ENCODE measurements at regions of chr1 and their contacts with region 1.

Region 1: GRCh38 chr1:181021811-181022434 is 747 bp downstream of the STX6 start:
- DNase-seq: peak in 8 of 9 experiments; percentile 42 to 82 (median 59)
- ATAC-seq: peak; percentile 37
- H3K4me3 ChIP-seq: peak overlapping the region; percentile 84 to 91
- H3K4me3 Mint-ChIP-seq: peak overlapping the region; percentile 95
- H3K27ac ChIP-seq: peak overlapping the region; percentile 71 to 84
- H3K27ac Mint-ChIP-seq: peak overlapping the region; percentile 96
- H3K4me1 ChIP-seq: peaks cover 31% of the 10 kb centered on the region
- H3K4me1 Mint-ChIP-seq: peaks cover 44% of the 10 kb centered on the region
- H3K27me3 ChIP-seq: no peaks in the 10 kb centered on the region
- H3K27me3 Mint-ChIP-seq: no peaks in the 10 kb centered on the region
- CTCF ChIP-seq: no peak

Region 2: GRCh38 chr1:179129702-179130473 is 1892.0 kb before region 1 on chr1:
- CTCF ChIA-PET with region 1: no interaction called
- POLR2A ChIA-PET with region 1: no interaction called
- intact Hi-C with region 1: no loop called
- DNase-seq: peak in 5 of 9 experiments; percentile 6 to 83 (median 64)
- ATAC-seq: peak; percentile 96
- H3K4me3 ChIP-seq: peak overlapping the region; percentile 12 to 26
- H3K4me3 Mint-ChIP-seq: peak overlapping the region; percentile 68
- H3K27ac ChIP-seq: peak overlapping the region; percentile 52 to 80
- H3K27ac Mint-ChIP-seq: peak overlapping the region; percentile 90
- H3K4me1 ChIP-seq: peaks cover 17% of the 10 kb centered on the region
- H3K4me1 Mint-ChIP-seq: peaks cover 19% of the 10 kb centered on the region
- H3K27me3 ChIP-seq: no peaks in the 10 kb centered on the region
- H3K27me3 Mint-ChIP-seq: no peaks in the 10 kb centered on the region
- CTCF ChIP-seq: no peak

Region 3: DNA sequence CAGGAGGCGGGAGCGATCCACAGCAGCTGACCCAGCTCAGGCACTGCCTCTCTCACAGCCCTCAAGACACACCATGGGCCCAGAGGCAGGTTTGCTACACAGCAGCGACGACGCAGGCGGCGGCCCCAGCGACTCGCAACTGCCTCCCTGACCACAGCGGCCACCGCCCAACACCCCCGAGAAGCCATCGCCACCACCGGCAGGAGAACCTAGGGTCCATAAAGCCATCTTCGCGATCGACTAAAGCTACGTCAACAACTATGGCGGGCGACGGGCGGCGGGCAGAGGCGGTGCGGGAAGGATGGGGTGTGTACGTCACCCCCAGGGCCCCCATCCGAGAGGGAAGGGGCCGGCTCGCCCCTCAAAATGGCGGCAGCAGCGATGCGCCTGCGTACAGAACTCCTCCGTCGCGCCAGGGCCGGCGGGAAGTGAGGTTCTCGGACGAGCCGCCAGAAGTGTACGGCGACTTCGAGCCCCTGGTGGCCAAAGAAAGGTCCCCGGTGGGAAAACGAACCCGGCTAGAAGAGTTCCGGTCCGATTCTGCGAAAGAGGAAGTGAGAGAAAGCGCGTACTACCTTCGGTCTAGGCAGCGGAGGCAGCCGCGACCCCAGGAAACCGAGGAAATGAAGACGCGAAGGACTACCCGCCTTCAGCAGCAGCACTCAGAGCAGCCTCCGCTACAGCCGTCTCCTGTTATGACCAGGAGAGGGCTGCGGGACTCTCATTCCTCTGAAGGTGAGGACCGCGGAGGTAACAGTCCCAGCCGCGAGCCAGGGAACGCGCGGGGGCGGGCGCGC is 1139.5 kb before region 1 on chr1 and contains the start of gene TOR1AIP1:
- CTCF ChIA-PET with region 1: no interaction called
- POLR2A ChIA-PET with region 1: no interaction called
- intact Hi-C with region 1: loop called (anchors 5 to 10 kb)
- DNase-seq: peak; percentile 95 to 99 (median 97)
- ATAC-seq: peak; percentile 74
- H3K4me3 ChIP-seq: peak within 1 kb of the TSS; percentile 91 to 95
- H3K4me3 Mint-ChIP-seq: peak within 1 kb of the TSS; percentile 94
- H3K27ac ChIP-seq: peak within 1 kb of the TSS; percentile 98 to 99
- H3K27ac Mint-ChIP-seq: peak within 1 kb of the TSS; percentile 100
- H3K4me1 ChIP-seq: peaks cover 37% of the 10 kb centered on the region
- H3K4me1 Mint-ChIP-seq: peaks cover 59% of the 10 kb centered on the region
- H3K27me3 ChIP-seq: no peaks in the 10 kb centered on the region
- H3K27me3 Mint-ChIP-seq: no peaks in the 10 kb centered on the region
- CTCF ChIP-seq: peak; percentile 41
- total RNA-seq, gene TOR1AIP1: 108 to 110 TPM

Region 4: GRCh38 chr1:180154325-180155181 is 867.4 kb before region 1 on chr1 and contains the start of gene QSOX1:
- CTCF ChIA-PET with region 1: no interaction called
- POLR2A ChIA-PET with region 1: no interaction called
- intact Hi-C with region 1: loop called (anchors 5 kb)
- DNase-seq: peak; percentile 77 to 95 (median 88)
- ATAC-seq: peak; percentile 96
- H3K4me3 ChIP-seq: peak within 1 kb of the TSS; percentile 86
- H3K4me3 Mint-ChIP-seq: peak within 1 kb of the TSS; percentile 91
- H3K27ac ChIP-seq: peak within 1 kb of the TSS; percentile 60 to 62
- H3K27ac Mint-ChIP-seq: peak within 1 kb of the TSS; percentile 87
- H3K4me1 ChIP-seq: peaks cover 22% of the 10 kb centered on the region
- H3K4me1 Mint-ChIP-seq: peaks cover 43% of the 10 kb centered on the region
- H3K27me3 ChIP-seq: no peaks in the 10 kb centered on the region
- H3K27me3 Mint-ChIP-seq: no peaks in the 10 kb centered on the region
- CTCF ChIP-seq: no peak
- total RNA-seq, gene QSOX1: 12.8 to 12.9 TPM

Region 5: DNA sequence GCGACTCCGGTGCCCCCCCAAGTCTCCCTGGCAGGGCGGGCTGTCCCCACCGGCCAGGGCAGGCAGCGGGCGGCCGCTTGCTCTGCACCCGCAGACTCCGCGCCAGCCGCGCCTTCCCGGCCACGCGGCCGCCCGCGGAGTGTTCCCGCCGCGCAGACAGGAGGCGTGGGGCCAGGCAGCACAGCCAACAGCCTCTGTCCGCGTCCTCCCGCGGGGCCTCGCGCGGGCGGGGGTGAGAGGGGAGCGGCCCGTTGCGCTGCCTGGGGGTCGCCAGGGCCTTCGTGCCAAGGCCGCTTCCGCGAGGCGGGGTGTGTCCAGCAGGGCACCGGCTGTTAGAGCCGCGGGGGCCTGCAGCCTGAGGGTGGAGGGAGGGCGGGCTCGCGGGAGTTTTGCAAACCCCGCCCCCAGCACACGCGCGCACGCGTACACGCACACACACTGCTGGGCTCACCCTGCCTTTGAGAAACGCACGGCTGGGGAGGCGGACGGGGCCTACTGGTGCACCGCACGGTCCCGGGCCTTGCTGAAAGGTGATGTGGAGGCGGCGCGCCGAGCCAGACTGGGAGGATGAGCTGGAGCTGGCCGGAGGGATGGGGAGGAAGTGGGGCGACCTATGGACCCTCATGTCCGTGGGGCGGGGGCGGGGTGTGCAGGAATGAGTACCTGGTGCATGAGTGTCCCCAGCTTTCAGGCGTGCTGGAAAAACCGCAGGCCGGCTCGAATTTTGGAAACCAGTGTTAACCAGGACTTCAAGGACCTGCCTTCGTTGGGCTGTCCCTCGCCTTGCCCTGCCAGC is 67.7 kb before region 1 on chr1:
- CTCF ChIA-PET with region 1: no interaction called
- POLR2A ChIA-PET with region 1: no interaction called
- intact Hi-C with region 1: loop called in 1 of 2 experiments (anchors 5 kb)
- DNase-seq: peak; percentile 28 to 85 (median 64)
- ATAC-seq: peak; percentile 92
- H3K4me3 ChIP-seq: peak overlapping the region; percentile 49 to 69
- H3K4me3 Mint-ChIP-seq: peak overlapping the region; percentile 72
- H3K27ac ChIP-seq: no peak overlapping the region
- H3K27ac Mint-ChIP-seq: no peak overlapping the region
- H3K4me1 ChIP-seq: peaks cover 5% of the 10 kb centered on the region
- H3K4me1 Mint-ChIP-seq: peaks cover 7% of the 10 kb centered on the region
- H3K27me3 ChIP-seq: no peaks in the 10 kb centered on the region
- H3K27me3 Mint-ChIP-seq: no peaks in the 10 kb centered on the region
- CTCF ChIP-seq: no peak

Region 6: GRCh38 chr1:181033799-181034451 is 12.0 kb after region 1 on chr1 and contains the start of gene MR1:
- CTCF ChIA-PET with region 1: interaction called, 13 read pairs
- POLR2A ChIA-PET with region 1: interaction called, 29 read pairs
- intact Hi-C with region 1: loop called (anchors 1 kb)
- DNase-seq: peak in 7 of 9 experiments; percentile 16 to 93 (median 48)
- ATAC-seq: peak; percentile 97
- H3K4me3 ChIP-seq: peak within 1 kb of the TSS; percentile 66 to 76
- H3K4me3 Mint-ChIP-seq: peak within 1 kb of the TSS; percentile 96
- H3K27ac ChIP-seq: peak within 1 kb of the TSS; percentile 85 to 99
- H3K27ac Mint-ChIP-seq: peak within 1 kb of the TSS; percentile 99
- H3K4me1 ChIP-seq: peaks cover 39% of the 10 kb centered on the region
- H3K4me1 Mint-ChIP-seq: peaks cover 55% of the 10 kb centered on the region
- H3K27me3 ChIP-seq: no peaks in the 10 kb centered on the region
- H3K27me3 Mint-ChIP-seq: no peaks in the 10 kb centered on the region
- CTCF ChIP-seq: no peak
- total RNA-seq, gene MR1: 15.4 to 16.0 TPM

Region 7: DNA sequence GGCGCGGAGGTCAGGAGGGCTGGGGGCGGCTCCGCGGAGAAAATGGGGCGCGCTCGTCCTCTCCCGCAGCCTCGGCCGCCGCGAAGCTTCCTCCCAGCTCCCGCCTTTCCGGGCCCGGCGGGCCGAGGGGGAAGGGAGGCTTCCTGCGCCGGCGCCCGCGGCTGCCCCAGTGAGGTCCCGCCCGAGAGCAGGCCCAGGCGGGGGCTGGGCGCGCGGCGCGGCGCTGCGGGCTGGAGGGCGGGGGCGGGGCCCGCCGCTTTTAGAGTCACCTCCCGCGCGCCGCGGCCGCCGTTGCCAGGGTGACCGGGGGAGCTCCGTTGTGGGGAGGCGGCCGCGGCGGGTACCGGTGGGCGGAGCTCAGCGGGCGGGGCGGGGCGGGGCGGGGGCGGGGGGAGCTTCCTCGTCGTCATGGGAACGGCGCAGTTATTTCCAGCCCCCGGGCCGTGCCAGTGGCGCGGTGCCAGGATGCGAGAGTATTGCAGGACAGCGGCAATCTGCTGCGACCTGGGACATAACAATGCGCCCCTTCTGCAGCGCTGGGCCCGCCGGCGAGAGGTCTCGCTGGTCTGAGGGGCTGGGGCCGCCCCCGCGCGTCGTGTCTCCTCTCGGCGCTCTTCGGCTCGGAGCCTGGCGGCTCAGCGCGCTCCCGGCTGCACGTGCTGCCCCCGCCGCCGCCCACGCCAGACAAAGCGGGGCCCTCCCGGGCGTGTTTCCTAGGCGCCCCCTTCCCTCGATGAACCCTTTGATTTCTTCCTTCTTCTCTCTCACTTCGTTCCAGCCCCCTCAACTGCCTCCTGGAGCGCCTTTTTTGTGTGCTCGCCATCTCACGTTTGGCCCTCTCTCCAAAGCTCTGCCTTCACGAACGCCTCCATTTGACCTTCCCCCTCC is 83.5 kb after region 1 on chr1:
- CTCF ChIA-PET with region 1: interaction called, 3 read pairs
- POLR2A ChIA-PET with region 1: interaction called, 5 read pairs
- intact Hi-C with region 1: loop called in 1 of 2 experiments (anchors 1 kb)
- DNase-seq: peak; percentile 80 to 96 (median 94)
- ATAC-seq: peak; percentile 85
- H3K4me3 ChIP-seq: peak overlapping the region; percentile 61 to 76
- H3K4me3 Mint-ChIP-seq: peak overlapping the region; percentile 90
- H3K27ac ChIP-seq: peak overlapping the region; percentile 52 to 74
- H3K27ac Mint-ChIP-seq: peak overlapping the region; percentile 91
- H3K4me1 ChIP-seq: peaks cover 25% of the 10 kb centered on the region
- H3K4me1 Mint-ChIP-seq: peaks cover 40% of the 10 kb centered on the region
- H3K27me3 ChIP-seq: no peaks in the 10 kb centered on the region
- H3K27me3 Mint-ChIP-seq: no peaks in the 10 kb centered on the region
- CTCF ChIP-seq: no peak

Region 8: DNA sequence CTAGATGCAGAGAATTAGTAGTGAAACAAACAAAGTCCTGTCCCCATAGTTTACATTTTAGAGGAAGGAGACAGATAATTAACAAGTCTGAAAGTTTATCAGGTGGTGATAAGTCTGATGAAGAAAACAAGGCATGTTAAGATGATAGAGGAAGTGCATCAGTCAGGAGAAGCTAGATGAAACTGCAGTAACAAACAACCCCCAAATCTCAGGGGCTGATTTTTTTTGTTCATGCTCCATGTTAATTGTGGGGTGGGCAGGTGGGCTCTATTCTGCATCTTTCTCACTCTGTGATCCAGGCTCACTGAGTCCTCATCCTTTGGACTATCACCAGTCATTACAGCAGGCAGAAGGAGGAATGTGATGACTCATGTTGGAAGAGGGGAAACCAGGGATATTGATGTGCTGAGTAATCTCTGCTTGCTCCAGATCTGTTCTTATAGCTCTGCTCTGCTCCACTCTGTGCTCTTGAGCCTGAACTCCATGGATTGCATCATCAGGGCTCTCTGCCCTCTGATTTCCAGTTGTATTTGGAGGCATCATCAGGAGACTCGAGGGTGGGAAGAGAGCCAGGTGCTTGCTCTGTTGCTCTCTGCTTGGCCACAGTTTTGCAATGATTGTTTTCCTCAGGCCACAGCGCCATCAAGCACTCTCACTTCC is 233.5 kb after region 1 on chr1:
- CTCF ChIA-PET with region 1: no interaction called
- POLR2A ChIA-PET with region 1: no interaction called
- intact Hi-C with region 1: no loop called
- DNase-seq: no peak
- ATAC-seq: no peak
- H3K4me3 ChIP-seq: no peak overlapping the region
- H3K4me3 Mint-ChIP-seq: no peak overlapping the region
- H3K27ac ChIP-seq: no peak overlapping the region
- H3K27ac Mint-ChIP-seq: no peak overlapping the region
- H3K4me1 ChIP-seq: no peaks in the 10 kb centered on the region
- H3K4me1 Mint-ChIP-seq: no peaks in the 10 kb centered on the region
- H3K27me3 ChIP-seq: no peaks in the 10 kb centered on the region
- H3K27me3 Mint-ChIP-seq: peaks cover 13% of the 10 kb centered on the region
- CTCF ChIP-seq: no peak

Region 9: DNA sequence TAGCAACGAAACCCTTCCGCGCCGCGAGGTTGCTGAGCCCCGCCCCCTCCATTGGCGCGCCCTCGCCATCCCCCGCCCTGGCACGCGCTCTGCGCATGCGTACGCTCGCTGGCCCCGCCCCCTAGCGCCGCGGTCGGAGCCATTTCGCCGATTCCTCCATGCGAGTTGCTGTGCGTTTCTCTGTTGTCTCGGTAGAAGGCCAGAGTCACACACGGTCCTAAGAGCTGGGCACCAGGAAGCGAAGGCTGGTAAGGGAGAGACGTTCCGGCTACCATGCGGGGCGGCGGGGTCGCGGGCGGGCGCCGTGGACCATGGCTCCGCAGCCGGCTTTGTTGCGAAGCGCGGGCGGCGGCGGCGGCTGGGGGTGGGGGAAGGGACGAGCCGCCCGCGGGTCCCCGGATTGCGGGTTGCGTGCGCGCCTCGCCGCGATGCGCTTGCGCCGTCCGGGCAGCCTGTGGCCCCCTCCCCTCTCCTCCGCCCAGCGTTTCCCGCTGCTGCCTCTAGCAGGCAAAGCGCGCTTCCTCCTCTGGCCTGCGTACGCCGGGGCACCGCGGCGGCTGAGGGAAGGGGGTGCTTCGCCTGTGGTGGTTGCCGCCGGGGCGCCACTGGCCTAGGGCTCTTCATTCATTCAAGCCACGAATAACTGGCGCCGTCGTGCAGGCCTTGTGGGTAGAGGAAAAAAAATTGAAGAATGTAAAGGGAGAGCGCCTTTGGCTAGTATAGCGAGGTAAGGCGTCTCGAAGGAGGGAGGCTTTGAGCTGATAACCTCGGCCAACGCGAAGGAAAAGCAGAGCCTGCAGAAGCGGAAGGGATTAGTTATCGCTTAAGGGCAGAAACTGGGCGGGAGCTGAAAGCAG is 1817.5 kb after region 1 on chr1 and contains the start of gene DHX9:
- CTCF ChIA-PET with region 1: no interaction called
- POLR2A ChIA-PET with region 1: no interaction called
- intact Hi-C with region 1: loop called in 1 of 2 experiments (anchors 5 kb)
- DNase-seq: peak; percentile 93 to 99 (median 96)
- ATAC-seq: peak; percentile 84
- H3K4me3 ChIP-seq: peak within 1 kb of the TSS; percentile 69 to 87
- H3K4me3 Mint-ChIP-seq: peak within 1 kb of the TSS; percentile 95
- H3K27ac ChIP-seq: peak within 1 kb of the TSS; percentile 66 to 86
- H3K27ac Mint-ChIP-seq: peak within 1 kb of the TSS; percentile 98
- H3K4me1 ChIP-seq: peaks cover 36% of the 10 kb centered on the region
- H3K4me1 Mint-ChIP-seq: peaks cover 49% of the 10 kb centered on the region
- H3K27me3 ChIP-seq: no peaks in the 10 kb centered on the region
- H3K27me3 Mint-ChIP-seq: no peaks in the 10 kb centered on the region
- CTCF ChIP-seq: peak; percentile 28
- total RNA-seq, gene DHX9: 374 to 382 TPM

Measured in CD8-positive, alpha-beta T cell (primary cell).